ENCODE measurements at regions of chr17 and their contacts with region 1.

Region 1: DNA sequence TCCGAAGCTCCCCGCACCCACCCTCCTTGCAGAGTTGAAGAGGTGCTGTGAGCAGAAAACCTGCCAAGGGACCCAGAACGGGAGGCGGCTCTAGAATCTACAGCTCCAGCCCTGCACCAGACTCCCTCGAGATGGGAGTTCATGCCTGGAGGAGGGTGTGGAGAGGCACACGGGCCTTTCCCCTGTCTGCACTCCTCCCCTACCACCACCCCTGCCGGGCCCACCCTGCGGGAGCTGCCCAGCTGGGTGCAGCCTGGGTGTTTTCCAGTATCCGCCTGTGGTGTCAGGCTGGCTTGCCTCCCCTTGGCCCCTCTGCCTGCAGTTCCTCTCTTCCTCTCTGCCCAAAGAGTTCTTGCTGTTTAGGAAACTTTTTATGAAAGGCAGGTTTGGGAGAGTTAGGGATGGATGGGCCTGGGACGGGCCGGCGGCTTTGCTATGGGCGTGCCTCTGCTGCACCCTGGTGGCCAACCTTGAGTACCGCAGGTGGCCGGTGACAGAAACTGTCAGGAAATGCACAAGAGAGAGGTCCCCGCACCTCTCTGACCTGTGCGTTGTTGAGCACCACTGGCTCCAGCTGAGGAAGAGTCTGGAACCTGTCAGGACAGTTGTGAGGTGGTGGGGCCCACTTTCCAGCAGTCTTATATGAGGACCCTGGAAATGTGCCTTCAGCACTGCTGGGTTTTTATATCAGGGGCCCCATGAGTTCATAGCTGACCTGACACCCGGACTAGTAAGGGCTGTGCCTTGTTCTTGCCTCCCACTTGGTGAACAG is 354.1 kb downstream of the SEC14L1 start:
- DNase-seq: peak; percentile 89
- ATAC-seq: peak; percentile 72

Region 2: GRCh38 chr17:77429919-77430752 is 64.7 kb before region 1 on chr17:
- intact Hi-C with region 1: loop called (anchors 5 kb)
- DNase-seq: peak; percentile 92
- ATAC-seq: peak; percentile 79

Region 3: GRCh38 chr17:77542551-77543490 is 48.0 kb after region 1 on chr17:
- intact Hi-C with region 1: no loop called
- DNase-seq: peak; percentile 86
- ATAC-seq: peak; percentile 96

Region 4: DNA sequence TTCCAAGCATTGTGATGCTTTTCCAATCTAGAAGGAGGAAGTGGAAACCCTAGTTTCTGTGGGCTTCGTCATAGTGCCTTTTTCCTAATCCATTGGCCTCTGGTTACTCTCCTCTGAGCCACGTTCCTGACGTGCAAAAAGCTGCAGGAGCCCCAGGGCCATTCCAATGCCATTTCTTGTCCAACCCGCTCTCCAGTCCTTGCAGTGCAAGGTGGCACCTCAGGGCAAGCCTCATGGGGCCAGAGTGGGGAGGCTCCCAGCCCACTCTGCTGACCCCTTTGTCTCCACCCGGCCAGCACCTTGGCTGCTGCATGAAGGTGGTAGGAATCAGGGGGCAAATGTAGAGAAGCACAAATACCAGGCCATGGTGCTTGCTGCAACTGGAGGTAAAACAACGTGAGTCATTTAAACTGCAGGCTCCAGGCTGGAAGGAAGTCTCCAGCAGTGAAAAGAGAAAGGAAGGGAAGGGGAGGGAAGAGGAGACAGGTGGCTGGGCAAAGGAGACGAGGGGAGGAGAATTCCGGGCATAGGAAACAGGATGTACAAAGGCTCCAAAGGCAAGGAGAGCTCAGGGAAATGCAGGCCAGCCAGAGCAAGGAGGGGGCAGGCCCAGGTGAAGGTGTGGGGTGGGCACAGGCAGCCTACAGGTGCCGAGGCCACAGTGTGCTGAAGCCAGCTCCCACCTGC is 295.4 kb after region 1 on chr17:
- intact Hi-C with region 1: no loop called
- DNase-seq: no peak
- ATAC-seq: no peak